ENCODE measurements at regions of chr1 and their contacts with region 1.

Region 1: GRCh38 chr1:101238681-101239094 is 1.9 kb downstream of the S1PR1 start:
- DNase-seq: peak; percentile 80 to 87 (median 82)
- H3K4me3 ChIP-seq: peak overlapping the region; percentile 94 to 97
- H3K4me3 Mint-ChIP-seq: peak overlapping the region; percentile 96 to 100 (median 98)
- H3K27ac ChIP-seq: peak overlapping the region; percentile 90
- H3K27ac Mint-ChIP-seq: peak overlapping the region; percentile 97 to 100 (median 98)
- H3K4me1 ChIP-seq: peaks cover 66% of the 10 kb centered on the region
- H3K4me1 Mint-ChIP-seq: peaks cover 37 to 92% (median 50%) of the 10 kb centered on the region in 4 donors
- H3K27me3 ChIP-seq: no peaks in the 10 kb centered on the region
- H3K27me3 Mint-ChIP-seq: no peaks in the 10 kb centered on the region

Region 2: GRCh38 chr1:100928128-100928527 is 310.6 kb before region 1 on chr1:
- CTCF ChIA-PET with region 1: interaction called, 129 read pairs
- POLR2A ChIA-PET with region 1: interaction called, 335 read pairs
- intact Hi-C with region 1: loop called (anchors 1 kb)
- DNase-seq: no peak
- H3K4me3 ChIP-seq: peak overlapping the region in 1 of 2 donors; percentile 39
- H3K4me3 Mint-ChIP-seq: no peak overlapping the region
- H3K27ac ChIP-seq: peak overlapping the region; percentile 50
- H3K27ac Mint-ChIP-seq: no peak overlapping the region
- H3K4me1 ChIP-seq: peaks cover 95% of the 10 kb centered on the region
- H3K4me1 Mint-ChIP-seq: peaks cover 38 to 64% (median 49%) of the 10 kb centered on the region in 4 donors
- H3K27me3 ChIP-seq: no peaks in the 10 kb centered on the region
- H3K27me3 Mint-ChIP-seq: no peaks in the 10 kb centered on the region

Region 3: GRCh38 chr1:101002551-101002950 is 236.1 kb before region 1 on chr1:
- CTCF ChIA-PET with region 1: interaction called, 5 read pairs
- POLR2A ChIA-PET with region 1: interaction called, 16 read pairs
- intact Hi-C with region 1: loop called (anchors 2 kb)
- DNase-seq: no peak
- H3K4me3 ChIP-seq: no peak overlapping the region
- H3K4me3 Mint-ChIP-seq: peak overlapping the region in 3 of 8 donors; percentile 10 to 71 (median 54)
- H3K27ac ChIP-seq: no peak overlapping the region
- H3K27ac Mint-ChIP-seq: peak overlapping the region; percentile 44 to 90 (median 76)
- H3K4me1 ChIP-seq: peaks cover 58% of the 10 kb centered on the region
- H3K4me1 Mint-ChIP-seq: peaks cover 46 to 64% (median 50%) of the 10 kb centered on the region in 4 donors
- H3K27me3 ChIP-seq: no peaks in the 10 kb centered on the region
- H3K27me3 Mint-ChIP-seq: no peaks in the 10 kb centered on the region

Region 4: GRCh38 chr1:101122452-101123166 is 116.1 kb before region 1 on chr1:
- CTCF ChIA-PET with region 1: interaction called, 11 read pairs
- POLR2A ChIA-PET with region 1: interaction called, 37 read pairs
- intact Hi-C with region 1: no loop called
- DNase-seq: peak in 3 of 5 donors; percentile 22 to 39 (median 32)
- H3K4me3 ChIP-seq: peak overlapping the region in 1 of 2 donors; percentile 4
- H3K4me3 Mint-ChIP-seq: peak overlapping the region in 6 of 8 donors; percentile 40 to 59 (median 46)
- H3K27ac ChIP-seq: no peak overlapping the region
- H3K27ac Mint-ChIP-seq: peak overlapping the region; percentile 60 to 90 (median 82)
- H3K4me1 ChIP-seq: peaks cover 40% of the 10 kb centered on the region
- H3K4me1 Mint-ChIP-seq: peaks cover 38 to 61% (median 48%) of the 10 kb centered on the region in 4 donors
- H3K27me3 ChIP-seq: no peaks in the 10 kb centered on the region
- H3K27me3 Mint-ChIP-seq: no peaks in the 10 kb centered on the region

Region 5: GRCh38 chr1:101187297-101187696 is 51.4 kb before region 1 on chr1:
- CTCF ChIA-PET with region 1: interaction called, 6 read pairs
- POLR2A ChIA-PET with region 1: interaction called, 18 read pairs
- intact Hi-C with region 1: no loop called
- DNase-seq: no peak
- H3K4me3 ChIP-seq: no peak overlapping the region
- H3K4me3 Mint-ChIP-seq: peak overlapping the region in 2 of 8 donors; percentile 1 to 12
- H3K27ac ChIP-seq: no peak overlapping the region
- H3K27ac Mint-ChIP-seq: peak overlapping the region in 2 of 7 donors; percentile 55 to 68
- H3K4me1 ChIP-seq: no peaks in the 10 kb centered on the region
- H3K4me1 Mint-ChIP-seq: peaks cover 6 to 16% (median 10%) of the 10 kb centered on the region in 4 donors
- H3K27me3 ChIP-seq: no peaks in the 10 kb centered on the region
- H3K27me3 Mint-ChIP-seq: no peaks in the 10 kb centered on the region

Region 6: DNA sequence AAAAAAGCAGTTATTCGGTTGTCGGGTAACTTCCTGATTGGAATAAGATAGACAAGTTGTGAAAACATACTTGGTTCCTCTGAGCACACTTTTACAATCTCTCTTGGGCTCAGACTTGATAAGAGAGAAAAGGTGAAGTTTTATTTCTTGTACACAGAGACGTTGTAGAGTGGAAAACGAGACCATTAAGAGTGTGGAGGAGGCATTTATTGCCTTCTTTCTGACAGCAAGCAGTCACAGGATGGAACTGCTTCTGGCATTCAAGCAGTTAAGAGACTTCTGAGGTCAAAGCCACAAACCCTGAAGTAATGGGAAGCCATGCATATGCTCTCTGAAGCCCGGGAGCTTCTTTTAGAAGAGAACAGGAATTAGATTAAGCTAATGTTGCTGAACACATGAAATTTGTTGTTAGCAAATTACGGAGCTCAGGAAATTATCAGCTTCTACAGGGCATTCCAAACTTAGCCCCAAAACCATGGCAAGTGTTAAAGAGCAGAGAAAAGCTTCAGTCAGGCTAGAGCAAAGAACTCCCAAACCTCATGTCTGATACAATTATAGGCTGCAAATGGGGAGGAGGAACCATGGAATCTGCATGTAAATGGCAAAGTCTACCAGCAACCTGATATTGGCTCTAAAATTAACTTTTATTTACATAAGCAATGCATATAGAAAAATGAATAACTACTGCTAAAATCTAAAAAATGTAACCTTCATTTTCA is 24.1 kb after region 1 on chr1:
- CTCF ChIA-PET with region 1: interaction called, 79 read pairs
- POLR2A ChIA-PET with region 1: interaction called, 205 read pairs
- intact Hi-C with region 1: loop called (anchors 1 kb)
- DNase-seq: peak; percentile 52 to 65 (median 57)
- H3K4me3 ChIP-seq: peak overlapping the region in 1 of 2 donors; percentile 23
- H3K4me3 Mint-ChIP-seq: peak overlapping the region; percentile 76 to 88 (median 80)
- H3K27ac ChIP-seq: peak overlapping the region; percentile 41
- H3K27ac Mint-ChIP-seq: peak overlapping the region; percentile 62 to 93 (median 92)
- H3K4me1 ChIP-seq: peaks cover 99% of the 10 kb centered on the region
- H3K4me1 Mint-ChIP-seq: peaks cover 73 to 91% (median 81%) of the 10 kb centered on the region in 4 donors
- H3K27me3 ChIP-seq: no peaks in the 10 kb centered on the region
- H3K27me3 Mint-ChIP-seq: no peaks in the 10 kb centered on the region

Region 7: GRCh38 chr1:101357444-101357986 is 118.8 kb after region 1 on chr1:
- CTCF ChIA-PET with region 1: interaction called, 12 read pairs
- POLR2A ChIA-PET with region 1: interaction called, 9 read pairs
- intact Hi-C with region 1: loop called (anchors 1 kb)
- DNase-seq: peak; percentile 78 to 87 (median 83)
- H3K4me3 ChIP-seq: no peak overlapping the region
- H3K4me3 Mint-ChIP-seq: peak overlapping the region in 4 of 8 donors; percentile 4 to 65 (median 55)
- H3K27ac ChIP-seq: no peak overlapping the region
- H3K27ac Mint-ChIP-seq: peak overlapping the region in 5 of 7 donors; percentile 67 to 96 (median 88)
- H3K4me1 ChIP-seq: peaks cover 13% of the 10 kb centered on the region
- H3K4me1 Mint-ChIP-seq: peaks cover 7 to 10% (median 10%) of the 10 kb centered on the region in 4 donors
- H3K27me3 ChIP-seq: no peaks in the 10 kb centered on the region
- H3K27me3 Mint-ChIP-seq: no peaks in the 10 kb centered on the region

Region 8: GRCh38 chr1:102751111-102751510 is 1512.4 kb after region 1 on chr1:
- CTCF ChIA-PET with region 1: no interaction called
- POLR2A ChIA-PET with region 1: no interaction called
- intact Hi-C with region 1: no loop called
- DNase-seq: no peak
- H3K4me3 ChIP-seq: no peak overlapping the region
- H3K4me3 Mint-ChIP-seq: no peak overlapping the region
- H3K27ac ChIP-seq: no peak overlapping the region
- H3K27ac Mint-ChIP-seq: no peak overlapping the region
- H3K4me1 ChIP-seq: no peaks in the 10 kb centered on the region
- H3K4me1 Mint-ChIP-seq: no peaks in the 10 kb centered on the region
- H3K27me3 ChIP-seq: no peaks in the 10 kb centered on the region
- H3K27me3 Mint-ChIP-seq: no peaks in the 10 kb centered on the region